Aorta (tissue), 5 donors: ENCODE measurements at regions of chr13 and their contacts with region 1.

Region 1: GRCh38 chr13:109454167-109454917 is 332.0 kb downstream of the IRS2 start:
- DNase-seq: peak; percentile 50 to 79
- ATAC-seq: peak; percentile 83
- H3K4me3 ChIP-seq: no peak overlapping the region
- H3K27ac ChIP-seq: peak overlapping the region; percentile 84 to 86
- H3K4me1 ChIP-seq: peaks cover 0 to 9% of the 10 kb centered on the region in 2 donors
- H3K27me3 ChIP-seq: no peaks in the 10 kb centered on the region

Region 2: GRCh38 chr13:109256866-109257760 is 197.2 kb before region 1 on chr13:
- intact Hi-C with region 1: loop called in 1 of 2 experiments (anchors 10 kb)
- DNase-seq: no peak
- ATAC-seq: peak; percentile 29
- H3K4me3 ChIP-seq: no peak overlapping the region
- H3K27ac ChIP-seq: peak overlapping the region in 1 of 2 donors; percentile 83
- H3K4me1 ChIP-seq: no peaks in the 10 kb centered on the region
- H3K27me3 ChIP-seq: no peaks in the 10 kb centered on the region

Region 3: GRCh38 chr13:109628251-109628699 is 173.9 kb after region 1 on chr13:
- intact Hi-C with region 1: loop called in 1 of 2 experiments (anchors 10 kb)
- DNase-seq: no peak
- ATAC-seq: no peak
- H3K4me3 ChIP-seq: no peak overlapping the region
- H3K27ac ChIP-seq: no peak overlapping the region
- H3K4me1 ChIP-seq: peaks cover 0 to 3% of the 10 kb centered on the region in 2 donors
- H3K27me3 ChIP-seq: no peaks in the 10 kb centered on the region

Region 4: GRCh38 chr13:109778102-109778542 is 323.8 kb after region 1 on chr13:
- intact Hi-C with region 1: loop called in 1 of 2 experiments (anchors 10 kb)
- DNase-seq: no peak
- ATAC-seq: no peak
- H3K4me3 ChIP-seq: peak overlapping the region; percentile 10 to 80
- H3K27ac ChIP-seq: no peak overlapping the region
- H3K4me1 ChIP-seq: peaks cover 5 to 9% of the 10 kb centered on the region in 2 donors
- H3K27me3 ChIP-seq: no peaks in the 10 kb centered on the region

Region 5: DNA sequence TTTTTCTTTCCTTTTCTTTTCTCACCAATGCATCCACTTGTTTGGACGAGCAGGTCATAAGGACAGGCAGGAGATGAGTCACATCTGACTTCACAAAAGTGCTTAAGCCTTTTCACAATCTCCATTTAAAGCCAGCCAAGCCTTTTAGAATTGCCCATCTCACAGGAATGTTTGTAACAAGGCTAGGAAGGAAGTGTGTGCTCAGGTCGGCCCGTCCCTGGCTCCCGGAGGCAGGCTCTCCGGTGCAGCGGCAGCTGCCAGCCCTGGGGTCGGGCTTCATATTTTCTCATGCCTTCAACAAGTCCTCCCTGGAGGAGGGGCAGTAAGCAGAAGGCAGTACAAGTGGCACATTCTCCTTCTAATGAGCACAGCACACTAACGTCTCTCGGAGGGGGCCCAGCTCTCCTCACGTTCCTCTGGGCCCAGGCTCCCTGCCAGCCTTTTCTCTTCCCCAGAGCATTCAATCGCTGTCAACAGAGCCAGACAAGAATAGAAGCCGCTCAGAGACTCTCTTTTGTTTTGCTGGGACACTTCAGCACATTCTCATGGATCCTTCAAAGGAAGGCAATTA is 672.1 kb after region 1 on chr13:
- intact Hi-C with region 1: loop called in 1 of 2 experiments (anchors 10 kb)
- DNase-seq: peak in 1 of 2 donors; percentile 74
- ATAC-seq: peak; percentile 74
- H3K4me3 ChIP-seq: no peak overlapping the region
- H3K27ac ChIP-seq: peak overlapping the region in 1 of 2 donors; percentile 71
- H3K4me1 ChIP-seq: peaks cover 2 to 3% of the 10 kb centered on the region in 2 donors
- H3K27me3 ChIP-seq: no peaks in the 10 kb centered on the region